Psoas muscle (tissue), 8 donors: ENCODE measurements at regions of chr12 and their contacts with region 1.

Region 1: DNA sequence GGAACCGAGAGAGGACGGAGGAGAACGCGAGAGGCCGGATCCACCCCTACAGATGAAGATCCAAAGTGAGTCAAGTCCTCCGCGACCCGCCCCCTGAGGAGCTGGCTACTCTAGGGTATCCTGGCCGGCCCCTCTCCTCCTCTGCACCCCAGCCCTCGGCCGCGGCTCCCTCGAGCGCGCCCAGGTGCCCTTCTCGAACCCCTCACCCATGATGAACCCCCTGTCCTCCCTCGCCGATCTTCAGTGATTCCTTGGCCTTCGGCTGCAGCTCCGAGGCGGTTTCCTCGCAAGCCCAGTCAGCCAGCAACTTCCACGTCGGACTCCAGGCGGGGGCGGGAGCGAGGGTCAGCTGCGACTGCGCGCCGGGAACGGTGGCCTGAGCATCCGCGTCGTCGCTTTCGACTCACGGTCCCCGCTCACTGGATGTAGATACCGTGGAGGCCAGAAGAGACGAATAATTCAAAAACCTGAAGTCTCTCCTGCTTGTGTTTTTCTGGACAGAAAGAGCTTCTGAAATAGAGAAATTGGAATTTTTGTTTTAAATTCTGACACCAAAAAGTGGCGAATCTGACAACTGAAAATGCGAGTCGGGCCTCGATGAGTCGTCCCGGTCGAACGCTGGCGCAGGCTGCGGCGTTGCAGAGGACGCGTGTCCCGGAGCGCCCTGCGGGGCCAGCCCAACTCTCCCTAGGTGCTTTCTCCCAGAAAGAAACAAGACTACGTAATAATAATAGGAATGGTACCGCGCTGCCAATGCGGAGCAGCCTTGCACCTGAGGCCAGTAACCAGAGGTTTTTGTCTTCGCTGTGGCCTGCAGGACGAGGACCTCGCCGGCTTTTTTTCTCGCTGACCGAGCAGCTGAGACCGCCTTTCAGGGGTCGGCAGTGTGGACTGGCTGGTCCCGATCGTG is at the start of gene ARL1:
- DNase-seq: peak; percentile 90 to 94
- ATAC-seq: peak; percentile 89 to 95 (median 94)
- H3K4me3 ChIP-seq: peak within 1 kb of the TSS; percentile 89
- H3K27ac ChIP-seq: peak within 1 kb of the TSS; percentile 90
- H3K4me1 ChIP-seq: peaks cover 22% of the 10 kb centered on the region
- H3K27me3 ChIP-seq: no peaks in the 10 kb centered on the region
- CTCF ChIP-seq: no peak
- total RNA-seq, gene ARL1: 49.6 to 73.1 (median 67.1) TPM

Region 2: DNA sequence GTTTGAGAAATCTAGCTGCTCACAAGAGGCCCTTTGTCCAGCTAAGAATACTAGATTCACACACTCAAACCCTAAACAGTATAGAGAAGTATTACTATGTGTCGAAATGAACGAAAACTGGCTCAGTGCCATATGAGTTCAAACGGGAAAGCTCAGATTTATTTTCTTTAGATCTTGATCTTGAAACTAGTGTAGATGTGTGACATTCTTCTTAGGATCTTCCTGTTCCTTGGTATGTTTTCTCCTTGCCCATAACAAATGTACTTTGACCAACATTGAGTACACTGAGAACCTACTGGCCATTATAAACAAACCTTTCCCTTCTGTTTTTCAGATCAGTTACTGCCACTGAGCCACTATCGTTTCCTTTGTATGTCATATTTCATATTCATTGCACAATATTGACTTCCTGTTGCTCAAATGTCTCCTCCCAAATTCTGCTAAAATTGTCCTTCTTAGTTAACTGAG is 208.4 kb after region 1 on chr12:
- intact Hi-C with region 1: loop called in 1 of 2 experiments (anchors 10 kb)
- DNase-seq: no peak
- ATAC-seq: peak in 1 of 4 donors; percentile 46
- H3K4me3 ChIP-seq: no peak overlapping the region
- H3K27ac ChIP-seq: peak overlapping the region; percentile 88
- H3K4me1 ChIP-seq: peaks cover 88% of the 10 kb centered on the region
- H3K27me3 ChIP-seq: no peaks in the 10 kb centered on the region
- CTCF ChIP-seq: no peak

Region 3: DNA sequence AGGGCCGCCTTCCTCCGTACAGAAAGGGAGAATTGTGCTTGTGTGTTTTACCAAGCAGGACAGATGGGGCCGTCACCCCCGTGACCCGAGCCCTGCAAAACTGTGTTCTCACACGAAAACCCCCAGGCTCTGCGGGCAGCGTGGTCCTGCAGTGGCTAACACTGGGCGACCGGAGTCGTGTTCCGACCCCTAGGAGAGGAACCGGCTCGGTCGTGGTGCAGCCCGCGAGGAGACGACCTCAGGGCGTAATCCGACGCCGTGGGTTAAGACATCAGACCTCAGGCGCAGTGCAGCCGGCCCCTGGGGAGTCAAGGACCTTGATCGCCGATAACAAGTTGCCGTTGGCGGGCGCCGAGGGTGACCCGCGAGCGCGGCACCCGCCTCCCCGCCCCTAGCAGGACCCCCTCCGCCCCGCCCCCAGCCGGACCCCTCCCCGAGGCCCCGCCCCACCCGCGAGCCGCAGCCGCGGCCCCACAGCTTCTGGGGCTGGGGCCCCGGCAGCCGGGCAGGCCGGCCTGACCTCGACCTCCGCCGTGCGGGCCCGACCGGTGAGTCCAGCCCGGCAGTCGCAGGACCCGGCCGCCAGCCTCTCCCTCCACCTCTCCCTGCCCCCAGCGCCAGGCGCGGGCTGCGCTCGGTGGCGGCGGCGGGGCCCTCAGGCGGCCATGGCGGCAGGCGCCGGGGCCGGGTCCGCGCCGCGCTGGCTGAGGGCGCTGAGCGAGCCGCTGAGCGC is 289.7 kb after region 1 on chr12 and contains the start of gene CHPT1:
- intact Hi-C with region 1: loop called in 1 of 2 experiments (anchors 10 kb)
- DNase-seq: peak; percentile 80 to 90
- ATAC-seq: peak; percentile 68 to 77 (median 74)
- H3K4me3 ChIP-seq: peak within 1 kb of the TSS; percentile 96
- H3K27ac ChIP-seq: peak within 1 kb of the TSS; percentile 97
- H3K4me1 ChIP-seq: peaks cover 45% of the 10 kb centered on the region
- H3K27me3 ChIP-seq: no peaks in the 10 kb centered on the region
- CTCF ChIP-seq: no peak
- total RNA-seq, gene CHPT1: 17.9 to 31.3 (median 20.7) TPM